ENCODE measurements at regions of chr9 and their contacts with region 1.

Region 1: GRCh38 chr9:89919169-89919681 is 314.4 kb downstream of the GADD45G start:
- DNase-seq: peak; percentile 73
- H3K4me3 Mint-ChIP-seq: no peak overlapping the region
- H3K27ac Mint-ChIP-seq: no peak overlapping the region
- H3K4me1 Mint-ChIP-seq: peaks cover 14% of the 10 kb centered on the region
- H3K27me3 Mint-ChIP-seq: peaks cover 2% of the 10 kb centered on the region

Region 2: GRCh38 chr9:89576404-89576839 is 342.8 kb before region 1 on chr9:
- CTCF ChIA-PET with region 1: no interaction called
- intact Hi-C with region 1: loop called (anchors 1 kb)
- DNase-seq: peak; percentile 35
- H3K4me3 Mint-ChIP-seq: no peak overlapping the region
- H3K27ac Mint-ChIP-seq: no peak overlapping the region
- H3K4me1 Mint-ChIP-seq: peaks cover 6% of the 10 kb centered on the region
- H3K27me3 Mint-ChIP-seq: peaks cover 20% of the 10 kb centered on the region

Region 3: DNA sequence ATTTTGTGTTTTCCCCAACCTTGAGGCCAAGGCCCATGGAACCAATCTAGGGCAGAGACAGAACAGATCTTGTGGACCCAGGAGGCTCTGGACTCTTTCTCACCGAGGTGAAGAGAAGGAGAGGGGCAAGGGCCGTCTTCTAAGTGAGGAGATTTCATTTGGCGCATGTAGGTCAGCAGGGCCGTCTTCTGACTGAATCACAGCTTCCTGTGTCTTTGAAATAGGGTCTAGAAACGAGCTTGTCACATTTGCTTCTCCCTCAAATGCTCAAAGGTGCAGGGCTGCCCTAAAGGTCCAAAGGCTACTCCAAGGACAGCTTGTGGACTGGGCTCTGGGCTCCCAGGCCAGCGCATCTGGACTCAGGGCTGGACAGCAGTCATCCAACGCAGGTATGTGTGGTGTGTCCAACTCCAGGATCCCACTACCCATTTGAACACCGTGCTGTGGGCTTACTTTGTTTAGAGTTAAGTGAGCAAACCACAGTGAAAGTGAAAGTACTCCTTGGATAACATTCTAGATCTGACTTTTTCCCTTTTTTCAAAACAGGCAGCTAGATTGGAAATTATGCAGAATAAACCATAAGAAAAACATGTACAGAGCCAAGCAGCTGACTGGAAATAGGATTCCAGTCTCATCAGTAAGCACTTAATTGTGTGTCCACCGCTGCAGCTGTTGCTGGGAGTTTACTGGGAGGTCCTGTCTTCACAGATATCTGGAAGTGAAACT is 42.6 kb after region 1 on chr9:
- CTCF ChIA-PET with region 1: no interaction called
- intact Hi-C with region 1: no loop called
- DNase-seq: no peak
- H3K4me3 Mint-ChIP-seq: no peak overlapping the region
- H3K27ac Mint-ChIP-seq: peak overlapping the region; percentile 22
- H3K4me1 Mint-ChIP-seq: peaks cover 20% of the 10 kb centered on the region
- H3K27me3 Mint-ChIP-seq: no peaks in the 10 kb centered on the region

Region 4: DNA sequence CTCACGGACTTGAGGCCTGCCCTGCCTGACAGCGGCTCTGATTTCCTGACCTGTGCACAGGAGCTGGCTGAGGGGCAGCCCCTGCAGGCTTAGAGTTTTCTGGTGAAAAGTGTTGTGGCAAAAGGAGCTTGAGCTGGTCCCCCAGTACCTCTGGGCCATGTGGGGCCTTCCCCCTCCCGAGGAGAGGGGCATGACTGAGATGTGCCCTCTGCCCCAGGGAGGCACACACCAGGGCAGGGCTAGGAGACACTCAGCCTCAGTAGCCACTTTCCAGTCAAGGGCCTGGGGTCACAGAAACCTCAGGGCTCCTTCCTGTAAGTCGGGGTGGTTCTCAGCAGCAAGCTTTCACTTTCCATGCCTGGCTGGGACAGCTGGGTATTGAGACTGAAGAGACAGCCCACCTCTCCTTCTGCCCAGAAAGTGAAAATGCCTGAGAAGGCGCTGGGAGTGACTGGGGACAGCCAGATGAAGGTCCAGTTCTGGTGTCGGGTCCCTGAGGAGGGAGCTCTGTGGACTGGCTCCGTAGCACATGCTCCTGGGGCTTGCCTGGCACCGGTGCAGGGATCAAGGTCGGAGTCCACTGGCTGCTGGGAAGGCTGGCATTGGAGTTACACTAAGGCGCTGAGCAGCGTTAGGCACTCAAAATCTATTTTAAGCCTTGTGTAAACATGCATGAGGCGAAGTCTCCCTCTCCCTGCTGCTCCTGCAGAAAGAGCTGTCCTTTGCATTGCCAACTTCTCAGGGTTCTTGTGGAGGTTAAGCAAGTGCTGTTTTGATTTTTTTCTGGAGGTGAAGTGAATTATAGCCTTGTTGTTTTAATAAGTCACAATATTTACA is 80.5 kb after region 1 on chr9:
- CTCF ChIA-PET with region 1: interaction called, 4 read pairs
- intact Hi-C with region 1: loop called (anchors 2 kb)
- DNase-seq: peak; percentile 86
- H3K4me3 Mint-ChIP-seq: peak overlapping the region; percentile 47
- H3K27ac Mint-ChIP-seq: peak overlapping the region; percentile 72
- H3K4me1 Mint-ChIP-seq: peaks cover 26% of the 10 kb centered on the region
- H3K27me3 Mint-ChIP-seq: no peaks in the 10 kb centered on the region

Region 5: GRCh38 chr9:90801583-90802289 is 882.5 kb after region 1 on chr9 and contains the start of gene SYK:
- CTCF ChIA-PET with region 1: no interaction called
- intact Hi-C with region 1: no loop called
- DNase-seq: no peak
- H3K4me3 Mint-ChIP-seq: peak within 1 kb of the TSS; percentile 56
- H3K27ac Mint-ChIP-seq: no peak within 1 kb of the TSS
- H3K4me1 Mint-ChIP-seq: peaks cover 2% of the 10 kb centered on the region
- H3K27me3 Mint-ChIP-seq: peaks cover 74% of the 10 kb centered on the region
- total RNA-seq, gene SYK: 0.07 to 0.19 TPM

Measured in activated naive CD4-positive, alpha-beta T cell treated with anti-CD3 and anti-CD28 coated beads for 36 hours (primary cell).